ENCODE measurements at regions of chr11 and their contacts with region 1.

Region 1: DNA sequence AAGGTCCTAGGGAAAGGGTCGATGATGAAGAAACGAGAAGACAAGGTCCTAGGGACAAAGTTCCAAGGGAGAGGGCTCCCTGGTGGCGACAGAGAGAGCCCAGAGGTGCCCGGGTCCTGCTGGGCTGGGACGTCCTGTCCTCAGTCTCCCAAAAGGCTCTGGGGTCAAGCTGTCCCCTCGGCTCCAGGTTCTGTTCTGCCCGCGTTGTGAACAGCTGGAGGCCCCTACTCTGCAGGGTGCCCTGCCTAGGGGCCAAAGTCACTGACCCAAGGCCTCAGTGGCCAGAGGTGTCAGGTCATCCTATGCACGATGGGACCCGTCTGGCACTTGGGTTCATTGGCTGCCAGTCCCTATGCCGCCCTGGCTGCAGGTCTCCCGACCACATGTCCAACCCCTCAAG is 49.9 kb upstream of the SLC22A12 start:
- DNase-seq: no peak
- H3K4me3 ChIP-seq: no peak overlapping the region
- CTCF ChIP-seq: no peak
- POLR2A ChIP-seq: no peak

Region 2: GRCh38 chr11:64500176-64501013 is 40.7 kb before region 1 on chr11:
- intact Hi-C with region 1: loop called (anchors 1 kb)
- DNase-seq: peak in 1 of 2 donors; percentile 76
- H3K4me3 ChIP-seq: no peak overlapping the region
- CTCF ChIP-seq: no peak
- POLR2A ChIP-seq: no peak

Region 3: DNA sequence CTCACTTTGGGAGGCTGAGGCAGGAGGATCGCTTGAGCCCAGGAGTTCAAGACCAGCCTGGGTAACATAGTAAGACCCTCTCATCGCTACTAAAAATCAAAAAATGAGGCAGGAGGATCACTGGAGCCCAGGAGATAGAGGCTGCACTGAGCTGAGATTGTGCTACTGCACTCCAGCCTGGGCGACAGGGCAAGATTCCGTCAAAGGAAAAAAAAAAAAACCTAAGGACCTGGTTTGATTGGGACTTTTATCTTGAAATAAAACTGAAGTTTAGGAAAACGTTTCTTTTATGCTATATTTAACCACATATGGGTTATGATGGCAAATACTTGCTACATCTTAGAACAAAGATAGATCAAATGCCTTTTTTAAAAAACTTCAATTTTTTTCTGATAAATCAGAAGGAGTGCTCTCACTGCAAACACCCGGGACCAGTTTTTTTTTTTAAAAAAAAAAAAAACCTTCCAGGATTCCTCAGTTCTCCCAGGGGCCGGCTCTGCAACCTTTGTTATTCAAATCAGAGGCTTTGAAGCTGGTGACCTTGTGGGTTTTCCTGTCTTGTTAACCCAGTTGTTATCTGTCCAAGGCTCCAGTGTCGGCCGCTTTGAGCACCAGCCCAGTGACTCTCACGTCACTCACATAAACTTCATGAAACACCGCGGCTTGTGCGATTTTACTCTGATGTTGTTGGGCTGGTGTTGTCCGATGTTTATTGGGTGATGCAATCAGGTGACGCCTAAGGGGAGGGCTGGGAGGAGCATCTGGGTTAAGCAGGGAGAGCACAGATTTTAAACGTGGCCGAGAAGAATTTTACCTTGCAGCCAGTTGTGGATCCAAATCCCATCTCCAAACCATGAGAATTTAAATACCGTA is 25.1 kb after region 1 on chr11:
- intact Hi-C with region 1: no loop called
- DNase-seq: peak in 1 of 2 donors; percentile 39
- H3K4me3 ChIP-seq: no peak overlapping the region
- CTCF ChIP-seq: no peak
- POLR2A ChIP-seq: no peak

Measured in lower leg skin (tissue), 4 donors.